ENCODE measurements at regions of chr12 and their contacts with region 1.

Region 1: GRCh38 chr12:64318605-64319004 is 72.0 kb downstream of the C12orf56 start:
- DNase-seq: peak; percentile 51 to 54
- H3K4me3 ChIP-seq: peak overlapping the region in 1 of 4 experiments; percentile 11; a peak in 1 of 8 replicates
- H3K27ac ChIP-seq: 0 out of 2 replicates have a peak overlapping the region, but pooled peaks have one; percentile 52
- H3K4me1 ChIP-seq: peaks cover 0 to 13% (median 2%) of the 10 kb centered on the region in 4 experiments; a peak in 2 of 7 replicates
- H3K27me3 ChIP-seq: no peaks in the 10 kb centered on the region
- CTCF ChIP-seq: peak; percentile 56 to 60 (median 59)
- EP300 ChIP-seq: no peak
- POLR2A ChIP-seq: no peak
- RAD21 ChIP-seq: peak; percentile 66 to 80

Region 2: GRCh38 chr12:64304571-64304970 is 14.0 kb before region 1 on chr12:
- CTCF ChIA-PET with region 1: interaction called, 11 read pairs
- POLR2A ChIA-PET with region 1: interaction called, 4 read pairs
- DNase-seq: no peak
- H3K4me3 ChIP-seq: no peak overlapping the region
- H3K27ac ChIP-seq: no peak overlapping the region
- H3K4me1 ChIP-seq: no peaks in the 10 kb centered on the region
- H3K27me3 ChIP-seq: no peaks in the 10 kb centered on the region
- CTCF ChIP-seq: no peak
- EP300 ChIP-seq: no peak
- POLR2A ChIP-seq: no peak
- RAD21 ChIP-seq: no peak